ENCODE measurements at regions of chr11 and their contacts with region 1.

Region 1: DNA sequence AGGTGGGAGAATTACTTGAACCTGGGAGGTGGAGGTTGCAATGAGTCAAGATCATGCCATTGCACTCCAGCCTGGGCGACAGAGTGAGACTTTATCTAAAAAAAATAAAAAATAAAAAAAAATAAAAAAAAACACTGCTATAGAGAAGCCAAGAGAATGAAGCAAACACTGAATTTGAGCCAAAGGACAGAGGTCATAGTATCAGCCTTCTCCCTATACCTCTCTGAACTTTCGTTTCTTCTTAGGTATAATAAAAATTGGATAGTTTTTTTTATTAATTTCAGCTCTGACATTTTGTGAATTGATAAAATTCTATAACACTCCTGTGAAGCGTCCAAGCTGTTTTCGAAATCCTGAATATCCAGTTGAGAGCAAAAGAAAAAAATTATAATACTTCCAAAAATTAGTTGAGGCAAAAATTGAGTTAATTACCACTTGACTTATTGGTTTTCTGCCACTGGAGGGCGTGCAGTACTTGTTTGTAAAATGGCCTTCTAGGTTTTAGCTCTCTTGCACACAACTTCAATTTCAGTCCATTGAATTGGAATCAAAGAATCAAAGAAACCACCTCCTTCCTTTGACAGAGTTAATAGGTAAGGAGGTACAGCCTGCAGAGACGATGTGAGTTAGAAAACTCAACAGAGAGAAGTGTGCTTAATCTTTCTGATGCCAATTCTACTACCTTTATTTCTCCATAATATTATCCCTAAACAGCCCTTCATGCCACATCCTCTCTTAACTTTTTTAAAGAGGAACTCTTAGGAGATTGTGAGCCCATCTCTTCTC is 143.2 kb downstream of the BBOX1 start:
- DNase-seq: peak; percentile 63
- ATAC-seq: peak; percentile 18; the same call in 1 of the 3 replicates
- H3K4me3 ChIP-seq: no peak overlapping the region
- H3K27ac ChIP-seq: no peak overlapping the region
- H3K4me1 ChIP-seq: peaks cover 43% of the 10 kb centered on the region
- H3K27me3 ChIP-seq: no peaks in the 10 kb centered on the region
- CTCF ChIP-seq: peak; percentile 76
- EP300 ChIP-seq: no peak
- POLR2A ChIP-seq: no peak
- RAD21 ChIP-seq: peak; percentile 77

Region 2: GRCh38 chr11:26993965-26994457 is 189.9 kb before region 1 on chr11 and contains the start of gene FIBIN:
- CTCF ChIA-PET with region 1: no interaction called
- POLR2A ChIA-PET with region 1: no interaction called
- in situ Hi-C with region 1: no loop called
- intact Hi-C with region 1: no loop called
- DNase-seq: no peak
- ATAC-seq: no peak
- H3K4me3 ChIP-seq: no peak within 1 kb of the TSS
- H3K27ac ChIP-seq: no peak within 1 kb of the TSS
- H3K4me1 ChIP-seq: no peaks in the 10 kb centered on the region
- H3K27me3 ChIP-seq: peaks cover 0 to 11% of the 10 kb centered on the region in 2 experiments; a peak in 2 of 5 replicates
- CTCF ChIP-seq: no peak
- EP300 ChIP-seq: no peak
- POLR2A ChIP-seq: no peak
- RAD21 ChIP-seq: no peak
- total RNA-seq, gene FIBIN: not detected in 2 replicates

Region 3: DNA sequence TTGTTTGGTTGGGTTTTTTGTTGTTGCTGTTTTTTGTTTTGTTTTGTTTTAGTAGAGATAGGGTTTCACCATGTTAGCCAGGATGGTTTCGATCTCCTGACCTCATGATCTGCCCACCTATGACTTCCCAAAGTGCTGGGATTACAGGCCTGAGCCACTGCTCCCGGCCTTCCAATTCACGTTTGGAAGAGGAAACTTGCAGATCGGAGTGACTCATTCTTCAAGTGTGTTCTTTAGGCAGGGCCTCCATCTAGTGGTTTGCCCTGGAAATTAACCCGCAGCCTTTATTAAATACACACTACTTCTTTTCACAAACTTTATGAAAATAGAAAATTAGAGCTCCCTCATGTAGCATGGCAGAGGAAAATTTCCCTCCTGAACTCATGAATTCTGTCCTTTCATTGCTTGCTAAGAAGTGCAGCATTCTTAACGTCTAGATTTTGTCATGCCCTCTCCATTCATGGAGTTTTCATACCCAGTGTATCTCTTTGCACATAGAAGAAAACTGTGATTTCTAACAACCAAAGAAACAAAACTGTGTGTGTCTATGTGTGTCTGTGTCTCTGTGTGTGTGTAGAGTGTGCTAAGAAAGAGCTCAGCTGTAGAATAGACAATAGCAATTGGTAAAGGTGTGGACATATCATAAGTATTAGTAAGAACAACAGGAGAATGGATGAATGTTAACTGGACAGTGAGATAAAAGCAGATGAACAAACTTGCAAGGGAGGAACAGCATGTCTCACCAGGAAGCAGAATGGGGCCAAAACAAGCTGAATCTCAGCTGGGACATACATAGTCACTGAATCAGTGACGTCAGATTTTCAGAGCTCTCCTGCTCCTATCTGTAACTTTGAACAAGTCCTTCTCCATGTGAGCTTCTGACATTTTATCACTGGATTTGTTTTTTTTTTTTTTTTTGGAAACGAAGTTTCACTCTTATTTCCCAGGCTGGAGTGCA is 24.9 kb before region 1 on chr11:
- CTCF ChIA-PET with region 1: no interaction called
- POLR2A ChIA-PET with region 1: no interaction called
- in situ Hi-C with region 1: no loop called
- intact Hi-C with region 1: no loop called
- DNase-seq: peak; percentile 69
- ATAC-seq: peak; percentile 92
- H3K4me3 ChIP-seq: no peak overlapping the region
- H3K27ac ChIP-seq: no peak overlapping the region
- H3K4me1 ChIP-seq: no peaks in the 10 kb centered on the region
- H3K27me3 ChIP-seq: no peaks in the 10 kb centered on the region
- CTCF ChIP-seq: peak; percentile 79
- EP300 ChIP-seq: no peak
- POLR2A ChIP-seq: no peak
- RAD21 ChIP-seq: peak; percentile 75

Region 4: GRCh38 chr11:27171376-27171775 is 12.5 kb before region 1 on chr11:
- CTCF ChIA-PET with region 1: no interaction called
- POLR2A ChIA-PET with region 1: no interaction called
- in situ Hi-C with region 1: no loop called
- intact Hi-C with region 1: no loop called
- DNase-seq: no peak
- ATAC-seq: no peak
- H3K4me3 ChIP-seq: no peak overlapping the region
- H3K27ac ChIP-seq: no peak overlapping the region
- H3K4me1 ChIP-seq: peaks cover 17% of the 10 kb centered on the region
- H3K27me3 ChIP-seq: peaks cover 1 to 5% of the 10 kb centered on the region in 2 experiments; a peak in 2 of 5 replicates
- CTCF ChIP-seq: no peak
- EP300 ChIP-seq: no peak
- POLR2A ChIP-seq: no peak
- RAD21 ChIP-seq: no peak

Region 5: GRCh38 chr11:27296497-27296896 is 112.6 kb after region 1 on chr11:
- CTCF ChIA-PET with region 1: interaction called, 4 read pairs
- POLR2A ChIA-PET with region 1: interaction called, 3 read pairs
- in situ Hi-C with region 1: loop called (anchors 10 kb)
- intact Hi-C with region 1: loop called (anchors 1 kb)
- DNase-seq: peak; percentile 44
- ATAC-seq: peak; percentile 74
- H3K4me3 ChIP-seq: no peak overlapping the region
- H3K27ac ChIP-seq: no peak overlapping the region
- H3K4me1 ChIP-seq: peaks cover 51% of the 10 kb centered on the region
- H3K27me3 ChIP-seq: no peaks in the 10 kb centered on the region
- CTCF ChIP-seq: peak; percentile 72
- EP300 ChIP-seq: no peak
- POLR2A ChIP-seq: no peak
- RAD21 ChIP-seq: peak; percentile 50

Region 6: GRCh38 chr11:27362749-27363575 is 179.1 kb after region 1 on chr11 and contains the start of gene CCDC34:
- CTCF ChIA-PET with region 1: no interaction called
- POLR2A ChIA-PET with region 1: no interaction called
- in situ Hi-C with region 1: loop called (anchors 5 kb)
- intact Hi-C with region 1: loop called (anchors 1 kb)
- DNase-seq: peak; percentile 87
- ATAC-seq: peak; percentile 96
- H3K4me3 ChIP-seq: peak within 1 kb of the TSS; percentile 59 to 88 (median 66)
- H3K27ac ChIP-seq: peak within 1 kb of the TSS; percentile 76
- H3K4me1 ChIP-seq: peaks cover 55% of the 10 kb centered on the region
- H3K27me3 ChIP-seq: no peaks in the 10 kb centered on the region; a peak in 1 of 5 replicates
- CTCF ChIP-seq: peak; percentile 42
- EP300 ChIP-seq: no peak
- POLR2A ChIP-seq: peak; percentile 51 to 69; a peak in 3 of 4 replicates
- RAD21 ChIP-seq: peak; percentile 84
- total RNA-seq, gene CCDC34: 34.3 and 37.9 TPM in 2 replicates

Region 7: DNA sequence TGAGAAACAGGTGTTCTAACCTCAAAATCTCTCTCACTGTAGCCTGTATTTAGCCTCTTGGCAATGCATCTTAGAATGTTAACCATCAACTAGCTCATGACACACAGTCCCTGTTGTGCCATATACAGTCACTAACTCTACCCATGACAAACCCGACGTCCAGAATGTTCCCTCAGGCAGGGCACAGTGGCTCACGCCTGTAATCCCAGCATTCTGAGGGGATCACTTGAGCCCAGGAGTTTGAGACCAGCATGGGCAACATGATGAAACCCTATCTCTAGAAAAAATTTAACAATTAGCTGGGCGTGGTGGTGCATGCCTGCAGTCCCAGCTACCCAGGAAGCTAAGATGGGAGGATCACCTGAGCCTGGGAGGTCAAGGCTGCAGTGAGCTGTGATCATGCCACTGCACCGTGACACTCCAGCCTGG is 197.4 kb after region 1 on chr11:
- CTCF ChIA-PET with region 1: no interaction called
- POLR2A ChIA-PET with region 1: no interaction called
- in situ Hi-C with region 1: no loop called
- intact Hi-C with region 1: loop called (anchors 5 kb)
- DNase-seq: no peak
- ATAC-seq: no peak
- H3K4me3 ChIP-seq: no peak overlapping the region
- H3K27ac ChIP-seq: no peak overlapping the region
- H3K4me1 ChIP-seq: peaks cover 17% of the 10 kb centered on the region
- H3K27me3 ChIP-seq: no peaks in the 10 kb centered on the region
- CTCF ChIP-seq: no peak
- EP300 ChIP-seq: no peak
- POLR2A ChIP-seq: no peak
- RAD21 ChIP-seq: no peak

Region 8: GRCh38 chr11:27485930-27486773 is 302.3 kb after region 1 on chr11:
- CTCF ChIA-PET with region 1: interaction called, 35 read pairs
- POLR2A ChIA-PET with region 1: no interaction called
- in situ Hi-C with region 1: no loop called
- intact Hi-C with region 1: loop called (anchors 1 kb)
- DNase-seq: peak; percentile 54
- ATAC-seq: peak; percentile 54
- H3K4me3 ChIP-seq: no peak overlapping the region
- H3K27ac ChIP-seq: no peak overlapping the region
- H3K4me1 ChIP-seq: peaks cover 6% of the 10 kb centered on the region; the same call in 1 of the 2 replicates
- H3K27me3 ChIP-seq: no peaks in the 10 kb centered on the region; a peak in 1 of 5 replicates
- CTCF ChIP-seq: peak; percentile 75
- EP300 ChIP-seq: no peak
- POLR2A ChIP-seq: no peak
- RAD21 ChIP-seq: peak; percentile 79

Region 9: DNA sequence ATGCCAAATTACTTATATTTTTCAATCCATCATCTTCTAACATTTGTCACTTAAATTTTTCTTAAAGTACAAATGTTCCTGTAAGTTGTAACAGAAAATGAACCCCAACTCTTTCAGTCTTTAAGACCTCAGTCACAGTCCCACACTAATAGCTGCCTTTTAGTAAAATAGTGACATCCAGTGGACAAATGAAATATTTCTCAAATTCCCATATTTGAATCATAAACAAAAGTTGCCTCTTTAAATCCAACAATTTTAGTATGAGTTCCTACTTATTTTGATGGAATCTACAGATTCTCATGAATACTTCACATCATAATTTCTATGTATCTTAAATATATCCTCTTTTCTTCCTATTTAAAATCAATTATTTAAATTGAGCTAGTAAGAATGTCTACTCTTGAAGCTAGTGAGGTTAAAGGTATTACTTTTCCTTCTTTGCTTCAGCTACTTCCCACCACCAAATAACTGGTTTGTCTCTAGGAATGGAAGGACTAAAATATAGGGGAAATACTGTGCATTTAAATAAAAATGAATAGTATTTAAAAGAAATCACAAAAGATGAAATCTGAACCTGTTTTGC is 313.5 kb after region 1 on chr11:
- CTCF ChIA-PET with region 1: interaction called, 8 read pairs
- POLR2A ChIA-PET with region 1: no interaction called
- in situ Hi-C with region 1: loop called (anchors 5 kb)
- intact Hi-C with region 1: loop called (anchors 1 kb)
- DNase-seq: peak; percentile 18
- ATAC-seq: peak; percentile 38; the same call in 1 of the 3 replicates
- H3K4me3 ChIP-seq: no peak overlapping the region
- H3K27ac ChIP-seq: no peak overlapping the region
- H3K4me1 ChIP-seq: peaks cover 4% of the 10 kb centered on the region; the same call in 1 of the 2 replicates
- H3K27me3 ChIP-seq: no peaks in the 10 kb centered on the region
- CTCF ChIP-seq: peak; percentile 55
- EP300 ChIP-seq: no peak
- POLR2A ChIP-seq: no peak
- RAD21 ChIP-seq: no peak

Measured in HepG2 (cell line).